ENCODE measurements at regions of chr16 and their contacts with region 1.

Region 1: GRCh38 chr16:58129097-58129936 is at the start of gene CFAP20:
- DNase-seq: peak; percentile 94 to 98 (median 97)
- H3K4me3 ChIP-seq: peak within 1 kb of the TSS; percentile 65 to 99 (median 89)
- H3K27ac ChIP-seq: peak within 1 kb of the TSS; percentile 3 to 97 (median 90)
- H3K27me3 ChIP-seq: no peaks in the 10 kb centered on the region
- CTCF ChIP-seq: peak in 38 of 56 donors; percentile 6 to 62 (median 27)
- total RNA-seq, gene CFAP20: 18.4 to 55.9 (median 42.9) TPM

Region 2: GRCh38 chr16:57781741-57782606 is 347.3 kb before region 1 on chr16:
- intact Hi-C with region 1: loop called in 1 of 2 experiments (anchors 10 kb)
- DNase-seq: no peak
- H3K4me3 ChIP-seq: no peak overlapping the region
- H3K27ac ChIP-seq: no peak overlapping the region
- H3K27me3 ChIP-seq: no peaks in the 10 kb centered on the region
- CTCF ChIP-seq: no peak

Region 3: DNA sequence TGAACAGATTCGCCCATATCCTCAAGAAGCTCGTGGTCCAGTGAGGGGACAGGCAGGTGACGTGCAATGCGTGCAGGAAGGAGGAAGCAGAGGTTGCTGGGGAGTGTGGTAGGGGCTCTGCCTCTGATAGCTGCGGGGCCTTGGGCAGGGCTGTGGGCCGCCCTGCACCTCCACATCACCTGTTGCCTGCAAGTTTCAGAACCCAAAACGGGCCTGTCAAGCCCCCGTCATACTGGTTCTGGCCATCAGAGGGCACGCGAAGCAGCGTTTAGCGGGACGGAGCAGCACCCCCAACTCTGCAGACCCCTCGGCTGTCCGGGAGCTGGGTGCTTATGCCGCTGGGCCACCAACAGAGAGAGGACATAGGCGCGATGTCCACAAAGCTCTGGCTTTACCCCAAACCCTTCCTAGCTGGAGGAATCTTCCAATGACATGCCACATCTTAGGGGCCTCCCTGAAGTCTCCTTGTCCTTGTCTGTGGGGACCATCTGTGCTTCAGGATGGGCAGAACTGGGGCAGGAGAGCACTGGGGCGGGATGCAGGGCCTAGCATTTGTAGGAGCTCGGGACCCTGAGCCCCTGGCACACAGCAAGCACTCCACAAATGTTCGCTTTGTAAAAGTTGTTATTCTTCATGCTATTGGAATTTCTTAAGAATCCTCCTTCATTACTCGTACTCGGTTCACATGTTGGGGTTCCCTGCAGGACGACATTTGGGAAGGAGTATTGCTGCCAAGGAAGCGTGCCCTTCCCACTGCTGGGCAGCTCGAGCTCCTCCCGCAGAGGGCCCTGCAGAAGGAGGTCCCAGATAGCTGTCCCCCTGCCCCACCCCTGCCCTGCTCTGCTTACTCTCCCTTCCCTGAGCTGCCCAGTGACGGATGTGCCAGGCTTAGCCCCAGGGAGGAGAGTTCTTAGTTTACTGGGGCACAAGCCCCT is 222.7 kb before region 1 on chr16:
- intact Hi-C with region 1: loop called in 1 of 2 experiments (anchors 5 kb)
- DNase-seq: peak in 1 of 10 donors; percentile 50
- H3K4me3 ChIP-seq: no peak overlapping the region
- H3K27ac ChIP-seq: no peak overlapping the region
- H3K27me3 ChIP-seq: peaks cover 0 to 4% (median 0%) of the 10 kb centered on the region in 45 donors
- CTCF ChIP-seq: peak in 53 of 56 donors; percentile 26 to 70 (median 54)

Region 4: DNA sequence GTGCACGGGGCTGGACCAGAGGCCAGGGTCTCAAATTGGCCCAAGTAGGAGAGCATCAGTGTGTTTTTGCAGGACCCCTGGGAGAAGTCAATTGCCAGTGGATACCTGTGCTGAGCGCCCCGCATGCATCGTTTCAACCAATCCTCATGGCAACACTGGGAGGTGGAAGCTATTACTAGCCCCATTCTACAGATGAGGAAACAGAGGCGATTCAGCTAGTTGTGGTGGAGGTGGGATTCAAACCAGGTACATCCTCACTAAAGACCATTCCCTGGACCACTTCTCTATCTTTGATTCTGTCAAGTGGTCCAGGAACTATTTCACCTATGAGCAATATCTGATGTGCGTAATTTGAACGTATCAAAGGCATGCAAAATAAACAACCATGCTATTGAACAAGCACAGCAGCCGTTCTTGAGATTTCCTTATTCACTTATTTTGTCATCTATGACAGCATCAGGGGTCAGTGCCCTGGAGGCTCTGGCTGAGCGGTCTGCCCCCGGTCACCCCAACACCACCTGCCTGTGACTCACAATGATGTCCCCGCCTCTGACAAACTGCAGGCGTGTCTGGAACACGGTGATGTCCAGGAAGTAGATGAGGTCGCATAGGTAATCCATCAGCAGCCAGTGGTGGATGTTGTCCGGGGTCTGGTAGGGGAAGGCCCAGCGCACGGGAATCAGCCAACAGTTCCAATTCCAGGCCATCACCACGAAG is 212.4 kb before region 1 on chr16:
- intact Hi-C with region 1: no loop called
- DNase-seq: no peak
- H3K4me3 ChIP-seq: no peak overlapping the region
- H3K27ac ChIP-seq: no peak overlapping the region
- H3K27me3 ChIP-seq: no peaks in the 10 kb centered on the region
- CTCF ChIP-seq: no peak

Region 5: DNA sequence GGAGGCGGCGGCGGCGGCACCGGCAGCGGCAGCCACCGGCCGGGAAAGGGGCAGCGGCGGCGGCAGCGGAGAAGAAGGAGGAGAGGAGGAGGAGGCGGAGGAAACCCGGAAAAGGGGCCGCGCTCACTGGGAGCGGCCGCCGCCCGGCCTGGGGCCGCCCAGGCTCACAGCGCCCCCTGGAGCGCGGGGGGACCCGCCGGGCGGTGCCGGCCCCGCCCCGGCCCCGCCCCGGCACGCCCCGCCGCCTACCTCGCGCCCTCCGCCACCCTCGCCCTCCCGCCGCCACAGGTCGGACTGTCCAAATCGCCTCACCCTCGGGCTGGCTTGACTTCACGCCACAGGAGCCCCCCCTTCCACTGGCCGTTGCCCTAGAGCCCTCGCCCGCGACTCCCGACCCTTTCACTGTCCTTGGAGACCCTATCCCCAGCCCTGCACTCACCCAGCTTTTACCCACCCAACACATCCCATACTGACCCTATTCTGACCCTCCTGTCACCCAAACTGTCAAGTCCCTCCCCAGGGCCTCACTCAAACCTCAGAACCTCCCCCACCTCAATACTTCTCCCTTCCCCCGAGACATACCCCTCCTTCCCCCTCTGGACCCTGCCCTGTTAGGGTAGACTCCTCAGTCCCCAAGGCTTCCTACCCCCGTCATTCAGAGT is 68.8 kb after region 1 on chr16 and contains the start of gene CSNK2A2:
- intact Hi-C with region 1: loop called (anchors 5 kb)
- DNase-seq: peak; percentile 30 to 76 (median 56)
- H3K4me3 ChIP-seq: peak within 1 kb of the TSS; percentile 51 to 88 (median 75)
- H3K27ac ChIP-seq: peak within 1 kb of the TSS in 5 of 59 donors; percentile 63 to 85 (median 71)
- H3K27me3 ChIP-seq: peaks cover 0 to 3% (median 0%) of the 10 kb centered on the region in 45 donors
- CTCF ChIP-seq: peak in 31 of 56 donors; percentile 13 to 60 (median 28)
- total RNA-seq, gene CSNK2A2: 39.0 to 73.3 (median 54.9) TPM

Region 6: GRCh38 chr16:58515125-58515870 is 386.0 kb after region 1 on chr16 and contains the start of gene SETD6:
- intact Hi-C with region 1: loop called in 1 of 2 experiments (anchors 10 kb)
- DNase-seq: peak; percentile 84 to 97 (median 92)
- H3K4me3 ChIP-seq: peak within 1 kb of the TSS; percentile 69 to 99 (median 91)
- H3K27ac ChIP-seq: peak within 1 kb of the TSS in 54 of 59 donors; percentile 1 to 83 (median 68)
- H3K27me3 ChIP-seq: no peaks in the 10 kb centered on the region
- CTCF ChIP-seq: peak in 41 of 56 donors; percentile 2 to 64 (median 31)
- total RNA-seq, gene SETD6: 14.5 to 47.1 (median 26.3) TPM

Measured in dorsolateral prefrontal cortex (tissue), 120 donors.